ENCODE measurements at regions of chr5 and their contacts with region 1.

Region 1: GRCh38 chr5:156956321-156956720 is 6.7 kb downstream of the TIMD4 start:
- DNase-seq: no peak
- H3K4me3 ChIP-seq: no peak overlapping the region
- H3K27ac ChIP-seq: no peak overlapping the region
- H3K4me1 ChIP-seq: peaks cover 24% of the 10 kb centered on the region
- CTCF ChIP-seq: no peak

Region 2: GRCh38 chr5:156942064-156942463 is 14.3 kb before region 1 on chr5:
- CTCF ChIA-PET with region 1: interaction called, 5 read pairs
- POLR2A ChIA-PET with region 1: interaction called, 20 read pairs
- intact Hi-C with region 1: no loop called
- DNase-seq: peak; percentile 76
- H3K4me3 ChIP-seq: peak overlapping the region; percentile 18
- H3K27ac ChIP-seq: peak overlapping the region; percentile 70
- H3K4me1 ChIP-seq: peaks cover 37% of the 10 kb centered on the region
- CTCF ChIP-seq: no peak

Region 3: GRCh38 chr5:158739951-158740757 is 1783.8 kb after region 1 on chr5:
- CTCF ChIA-PET with region 1: no interaction called
- POLR2A ChIA-PET with region 1: no interaction called
- intact Hi-C with region 1: no loop called
- DNase-seq: no peak
- H3K4me3 ChIP-seq: no peak overlapping the region
- H3K27ac ChIP-seq: no peak overlapping the region
- H3K4me1 ChIP-seq: peaks cover 10% of the 10 kb centered on the region
- CTCF ChIP-seq: no peak; the same call in 1 of the 2 replicates

Measured in OCI-LY7 (cell line).